Naive thymus-derived CD4-positive, alpha-beta T cell (primary cell): ENCODE measurements at regions of chr1 and their contacts with region 1.

Region 1: GRCh38 chr1:26372039-26372438 is 511 bp downstream of the ZNF683 start:
- DNase-seq: no peak
- ATAC-seq: no peak
- H3K4me3 ChIP-seq: no peak overlapping the region
- H3K4me3 Mint-ChIP-seq: peak overlapping the region in 9 of 10 donors; percentile 15 to 75 (median 56)
- H3K27ac ChIP-seq: no peak overlapping the region
- H3K27ac Mint-ChIP-seq: peak overlapping the region; percentile 42 to 93 (median 74)
- H3K4me1 ChIP-seq: peaks cover 66 to 73% of the 10 kb centered on the region in 2 donors
- H3K4me1 Mint-ChIP-seq: peaks cover 62 to 79% (median 73%) of the 10 kb centered on the region in 7 donors
- H3K27me3 ChIP-seq: no peaks in the 10 kb centered on the region
- H3K27me3 Mint-ChIP-seq: peaks cover 0 to 7% (median 0%) of the 10 kb centered on the region in 5 donors

Region 2: DNA sequence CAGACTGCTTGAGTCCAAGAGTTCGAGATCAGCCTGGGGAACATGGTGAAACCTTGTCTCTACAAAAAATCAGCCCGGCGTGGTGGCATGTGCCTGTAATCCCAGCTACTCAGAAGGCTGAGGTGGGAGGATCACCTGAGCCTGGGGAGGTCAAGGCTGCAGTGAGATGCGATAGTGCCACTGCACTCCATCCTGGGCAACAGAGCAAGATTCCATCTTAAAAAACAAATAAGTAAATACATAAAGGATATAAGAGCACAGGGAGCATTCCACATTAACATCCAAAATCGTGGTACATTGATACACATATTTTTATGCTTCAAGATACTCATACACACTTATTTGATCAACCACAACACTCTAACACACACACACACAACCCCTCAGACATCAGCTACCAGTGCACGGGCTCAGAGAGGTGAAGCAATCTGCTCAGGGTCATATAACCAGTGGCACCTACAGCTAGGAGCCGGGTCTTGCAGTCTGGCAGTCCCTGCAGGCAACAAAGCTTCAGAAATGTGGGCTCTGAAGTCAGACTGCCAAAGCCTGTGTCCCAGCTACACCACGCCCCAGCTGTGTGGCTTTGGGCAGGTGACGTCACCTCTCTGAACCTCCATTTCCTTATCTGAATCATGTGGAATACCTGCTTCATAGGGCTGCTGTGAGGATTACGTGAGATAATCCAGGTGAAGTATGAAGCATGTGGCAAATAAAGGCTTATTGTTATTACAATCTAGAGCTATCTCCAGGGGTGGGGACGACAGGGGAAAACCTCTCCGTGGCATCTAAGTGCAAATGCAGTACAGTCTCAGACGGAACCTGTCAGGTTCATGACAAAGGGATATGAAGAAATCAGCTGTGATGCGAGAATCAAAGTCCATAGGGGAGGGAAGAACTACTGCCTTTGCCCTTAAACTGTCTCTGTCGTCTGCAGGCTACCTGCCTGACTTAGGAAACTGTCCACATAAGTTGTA is 13.3 kb before region 1 on chr1:
- CTCF ChIA-PET with region 1: interaction called, 25 read pairs
- POLR2A ChIA-PET with region 1: interaction called, 25 read pairs
- intact Hi-C with region 1: no loop called
- DNase-seq: peak in 8 of 9 donors; percentile 58 to 88 (median 70)
- ATAC-seq: peak; percentile 84
- H3K4me3 ChIP-seq: peak overlapping the region; percentile 10
- H3K4me3 Mint-ChIP-seq: peak overlapping the region; percentile 43 to 83 (median 63)
- H3K27ac ChIP-seq: no peak overlapping the region
- H3K27ac Mint-ChIP-seq: peak overlapping the region in 8 of 9 donors; percentile 28 to 78 (median 46)
- H3K4me1 ChIP-seq: peaks cover 29 to 32% of the 10 kb centered on the region in 2 donors
- H3K4me1 Mint-ChIP-seq: peaks cover 25 to 47% (median 40%) of the 10 kb centered on the region in 7 donors
- H3K27me3 ChIP-seq: no peaks in the 10 kb centered on the region
- H3K27me3 Mint-ChIP-seq: peaks cover 7 to 29% (median 18%) of the 10 kb centered on the region in 5 donors

Region 3: GRCh38 chr1:26431979-26432695 is 60.1 kb after region 1 on chr1 and contains the start of gene DHDDS:
- CTCF ChIA-PET with region 1: no interaction called
- POLR2A ChIA-PET with region 1: no interaction called
- intact Hi-C with region 1: no loop called
- DNase-seq: peak; percentile 95 to 98 (median 97)
- ATAC-seq: peak; percentile 99
- H3K4me3 ChIP-seq: peak within 1 kb of the TSS; percentile 88
- H3K4me3 Mint-ChIP-seq: peak within 1 kb of the TSS; percentile 92 to 99 (median 96)
- H3K27ac ChIP-seq: peak within 1 kb of the TSS; percentile 76
- H3K27ac Mint-ChIP-seq: peak within 1 kb of the TSS; percentile 90 to 99 (median 93)
- H3K4me1 ChIP-seq: peaks cover 11 to 15% of the 10 kb centered on the region in 2 donors
- H3K4me1 Mint-ChIP-seq: peaks cover 14 to 26% (median 22%) of the 10 kb centered on the region in 7 donors
- H3K27me3 ChIP-seq: no peaks in the 10 kb centered on the region
- H3K27me3 Mint-ChIP-seq: peaks cover 0 to 15% (median 0%) of the 10 kb centered on the region in 5 donors
- total RNA-seq, gene DHDDS: 28.1 to 58.9 (median 37.7) TPM

Region 4: DNA sequence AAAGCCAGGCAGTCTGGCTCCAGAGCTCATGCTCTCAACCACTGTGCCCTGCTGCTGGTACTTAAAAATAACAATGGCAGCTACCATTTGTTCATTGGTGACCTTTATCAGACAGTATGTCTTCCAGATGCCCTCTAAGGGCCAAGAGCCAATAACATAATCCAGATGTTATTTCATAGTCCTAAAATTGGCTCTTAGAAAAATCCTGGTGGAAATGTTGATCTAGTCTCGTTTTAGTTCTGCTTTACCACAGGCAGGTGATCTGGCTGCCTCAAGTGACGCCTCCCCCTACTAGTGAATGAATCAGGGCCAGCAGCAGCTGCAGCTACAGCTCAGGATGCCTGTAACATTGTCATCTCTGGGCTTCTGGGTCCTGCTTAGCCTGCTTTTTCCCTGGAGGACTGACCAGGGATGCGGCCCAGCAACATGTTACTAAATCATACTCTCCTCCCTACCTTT is 87.6 kb after region 1 on chr1:
- CTCF ChIA-PET with region 1: no interaction called
- POLR2A ChIA-PET with region 1: no interaction called
- intact Hi-C with region 1: no loop called
- DNase-seq: no peak
- ATAC-seq: no peak
- H3K4me3 ChIP-seq: no peak overlapping the region
- H3K4me3 Mint-ChIP-seq: no peak overlapping the region
- H3K27ac ChIP-seq: no peak overlapping the region
- H3K27ac Mint-ChIP-seq: no peak overlapping the region
- H3K4me1 ChIP-seq: no peaks in the 10 kb centered on the region
- H3K4me1 Mint-ChIP-seq: peaks cover 0 to 7% (median 0%) of the 10 kb centered on the region in 7 donors
- H3K27me3 ChIP-seq: no peaks in the 10 kb centered on the region
- H3K27me3 Mint-ChIP-seq: no peaks in the 10 kb centered on the region